ENCODE measurements at regions of chr5 and their contacts with region 1.

Region 1: GRCh38 chr5:39578887-39579497 is 154.2 kb upstream of the DAB2 start:
- DNase-seq: no peak
- H3K4me3 ChIP-seq: no peak overlapping the region
- CTCF ChIP-seq: no peak
- POLR2A ChIP-seq: no peak

Region 2: GRCh38 chr5:38479315-38479904 is 1099.6 kb before region 1 on chr5:
- intact Hi-C with region 1: loop called (anchors 5 kb)
- DNase-seq: no peak
- H3K4me3 ChIP-seq: no peak overlapping the region
- CTCF ChIP-seq: no peak
- POLR2A ChIP-seq: no peak

Region 3: GRCh38 chr5:39631958-39632357 is 53.0 kb after region 1 on chr5:
- intact Hi-C with region 1: no loop called
- DNase-seq: no peak
- H3K4me3 ChIP-seq: no peak overlapping the region
- CTCF ChIP-seq: no peak
- POLR2A ChIP-seq: no peak

Region 4: DNA sequence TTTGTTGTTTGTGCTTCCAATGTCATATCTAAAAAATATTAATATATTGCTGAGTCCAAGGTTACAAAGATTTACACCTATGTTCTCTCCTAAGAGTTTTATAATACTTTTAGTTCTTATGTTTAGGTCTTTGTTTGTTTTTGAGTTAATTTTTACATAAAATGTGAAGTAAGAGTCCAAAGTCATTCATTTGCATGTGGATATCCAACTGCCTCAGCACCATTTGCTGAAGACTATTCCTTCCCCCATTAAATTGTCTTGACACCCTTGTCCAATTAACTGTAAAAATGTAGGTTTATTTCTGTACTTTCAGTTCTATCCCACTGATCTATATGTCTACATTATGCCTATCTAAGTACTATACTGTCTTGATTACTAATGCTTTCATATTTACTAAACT is 1141.1 kb after region 1 on chr5:
- intact Hi-C with region 1: loop called (anchors 10 kb)
- DNase-seq: no peak
- H3K4me3 ChIP-seq: no peak overlapping the region
- CTCF ChIP-seq: no peak
- POLR2A ChIP-seq: no peak

Measured in lower leg skin (tissue), 4 donors.